Dendritic cell treated with granulocyte-macrophage colony-stimulating factor and Interleukin-4, amounts not matched to agents 40 ng/mL and 50 ng/mL, for 4 days (primary cell): ENCODE measurements at regions of chr10 and their contacts with region 1.

Region 1: GRCh38 chr10:26090026-26090425 is 126.5 kb upstream of the GAD2 start:
- H3K4me3 Mint-ChIP-seq: no peak overlapping the region
- H3K27ac Mint-ChIP-seq: no peak overlapping the region
- H3K4me1 Mint-ChIP-seq: no peaks in the 10 kb centered on the region
- H3K27me3 Mint-ChIP-seq: peaks cover 1% of the 10 kb centered on the region

Region 2: DNA sequence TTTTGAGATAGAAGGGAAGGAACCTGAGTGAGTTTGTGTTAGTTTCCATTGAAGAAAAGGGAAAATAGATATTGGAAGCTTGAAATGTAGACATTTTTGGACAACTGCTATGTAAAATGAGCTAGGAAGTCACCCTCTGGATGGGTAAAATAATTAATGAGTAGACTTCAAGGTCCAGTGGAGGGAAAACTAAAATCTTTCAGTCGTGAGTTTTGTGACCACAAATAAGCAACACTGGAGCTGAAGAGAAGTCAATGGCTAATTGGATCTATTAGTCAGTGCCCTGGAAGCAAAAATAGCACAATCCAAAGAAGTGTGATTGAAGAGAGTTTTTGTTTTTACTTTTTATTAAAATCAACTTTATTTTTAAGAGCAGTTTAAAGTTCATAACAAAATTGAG is 32.6 kb before region 1 on chr10:
- intact Hi-C with region 1: loop called (anchors 1 kb)
- H3K4me3 Mint-ChIP-seq: no peak overlapping the region
- H3K27ac Mint-ChIP-seq: no peak overlapping the region
- H3K4me1 Mint-ChIP-seq: no peaks in the 10 kb centered on the region
- H3K27me3 Mint-ChIP-seq: no peaks in the 10 kb centered on the region